ENCODE measurements at regions of chr7 and their contacts with region 1.

Region 1: DNA sequence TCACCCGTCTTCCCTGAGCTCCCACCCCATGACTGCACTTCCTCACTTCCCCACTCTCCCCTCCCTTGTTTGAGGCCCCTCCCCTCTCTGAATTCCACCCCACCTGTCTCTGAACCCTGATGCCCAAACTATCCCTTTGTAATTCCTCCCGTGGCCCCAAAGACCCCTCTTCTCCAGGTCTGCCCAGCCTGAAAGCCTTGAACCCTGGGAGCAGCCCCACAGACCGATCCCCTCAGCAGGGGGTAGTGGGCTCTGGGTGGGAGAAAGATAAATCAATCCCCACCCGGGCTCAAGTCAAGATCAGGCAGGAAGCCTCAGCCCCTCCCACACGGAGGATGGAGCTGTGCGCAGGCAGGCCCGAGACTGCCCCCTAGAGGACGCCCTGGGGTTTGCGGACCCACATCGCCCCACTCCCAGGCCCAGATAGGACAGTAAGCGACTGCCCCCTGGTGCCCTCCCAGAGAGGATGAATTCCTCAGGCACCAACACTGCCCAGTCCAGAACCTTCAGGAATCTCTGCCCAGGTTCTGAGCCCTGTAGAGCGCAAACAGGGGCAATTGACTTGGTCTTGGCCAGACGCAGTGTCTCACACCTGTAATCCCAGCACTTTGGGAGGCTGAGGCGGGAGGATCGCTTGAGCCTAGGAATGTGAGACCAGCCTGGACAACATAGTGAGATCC is 11.7 kb downstream of the HSPB1 start:
- DNase-seq: peak; percentile 98
- ATAC-seq: peak; percentile 74

Region 2: DNA sequence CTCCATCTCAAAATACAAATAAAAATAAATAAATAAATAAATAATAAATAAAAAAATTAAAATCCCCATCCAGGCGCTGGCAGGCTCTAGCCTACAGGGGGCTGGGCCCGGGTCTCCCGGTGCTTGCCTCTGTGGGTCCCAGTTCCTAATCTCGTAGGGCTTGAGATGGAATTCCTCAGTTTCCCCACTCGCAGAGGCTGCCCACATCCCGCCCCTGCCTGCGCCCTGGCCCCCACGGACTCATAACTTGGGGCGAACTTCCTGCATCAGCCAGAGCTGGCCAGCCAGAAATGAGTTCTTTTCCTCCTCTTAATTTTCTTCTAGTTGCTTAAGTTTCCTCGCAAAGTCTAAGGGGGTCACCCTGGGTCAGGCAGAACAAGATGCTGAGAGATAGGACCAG is 134.5 kb before region 1 on chr7:
- intact Hi-C with region 1: loop called (anchors 1 kb)
- DNase-seq: no peak
- ATAC-seq: no peak

Region 3: DNA sequence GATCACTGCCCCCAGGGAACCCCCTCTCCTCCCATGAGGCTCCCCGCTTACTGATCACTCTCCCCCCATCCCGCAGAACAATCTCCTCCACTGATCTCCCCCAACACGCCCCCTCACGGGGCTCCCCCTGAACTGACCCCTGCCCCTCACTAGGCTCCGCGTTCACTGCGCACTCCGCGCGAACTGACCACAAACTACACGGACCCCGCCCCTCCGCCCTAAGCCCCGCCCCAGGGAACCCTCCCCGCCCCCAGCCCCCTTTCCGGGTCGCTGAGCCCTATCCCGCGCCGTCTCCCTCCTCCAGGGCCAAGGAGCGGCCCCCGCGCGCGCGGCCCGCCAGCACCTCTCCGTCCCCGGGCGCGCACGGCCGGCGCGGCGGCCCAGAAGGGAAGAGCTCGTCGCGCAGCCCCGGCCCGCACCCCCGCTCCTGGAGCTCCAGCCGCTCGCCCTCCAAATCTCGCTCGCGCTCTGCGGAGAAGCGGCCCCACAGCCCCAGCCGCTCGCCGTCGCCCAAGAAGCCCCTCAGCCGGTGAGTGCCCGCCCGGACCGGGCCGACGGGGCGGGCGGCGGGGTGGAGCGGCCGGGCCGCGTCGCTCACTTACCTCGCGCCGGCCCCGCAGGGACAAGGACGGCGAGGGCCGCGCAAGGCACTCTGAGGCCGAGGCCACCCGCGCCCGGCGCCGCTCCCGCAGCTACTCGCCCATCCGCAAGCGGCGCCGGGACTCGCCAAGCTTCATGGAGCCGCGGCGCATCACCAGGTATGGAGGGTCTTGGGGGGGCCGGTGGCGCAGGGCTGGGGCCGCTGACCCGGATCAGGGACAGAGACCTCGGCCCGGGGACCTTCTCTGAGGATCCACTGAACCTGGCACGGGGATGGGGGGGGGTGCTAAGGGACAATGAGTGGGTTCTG is 31.6 kb before region 1 on chr7:
- intact Hi-C with region 1: loop called (anchors 5 kb)
- DNase-seq: no peak
- ATAC-seq: peak; percentile 74

Region 4: GRCh38 chr7:76291343-76292212 is 22.6 kb before region 1 on chr7:
- intact Hi-C with region 1: loop called (anchors 1 kb)
- DNase-seq: peak; percentile 91
- ATAC-seq: peak; percentile 78

Region 5: GRCh38 chr7:76359111-76359978 is 45.2 kb after region 1 on chr7:
- intact Hi-C with region 1: loop called (anchors 1 kb)
- DNase-seq: peak; percentile 99
- ATAC-seq: peak; percentile 96